Esophagus muscularis mucosa (tissue), 4 donors: ENCODE measurements at regions of chr19 and their contacts with region 1.

Region 1: DNA sequence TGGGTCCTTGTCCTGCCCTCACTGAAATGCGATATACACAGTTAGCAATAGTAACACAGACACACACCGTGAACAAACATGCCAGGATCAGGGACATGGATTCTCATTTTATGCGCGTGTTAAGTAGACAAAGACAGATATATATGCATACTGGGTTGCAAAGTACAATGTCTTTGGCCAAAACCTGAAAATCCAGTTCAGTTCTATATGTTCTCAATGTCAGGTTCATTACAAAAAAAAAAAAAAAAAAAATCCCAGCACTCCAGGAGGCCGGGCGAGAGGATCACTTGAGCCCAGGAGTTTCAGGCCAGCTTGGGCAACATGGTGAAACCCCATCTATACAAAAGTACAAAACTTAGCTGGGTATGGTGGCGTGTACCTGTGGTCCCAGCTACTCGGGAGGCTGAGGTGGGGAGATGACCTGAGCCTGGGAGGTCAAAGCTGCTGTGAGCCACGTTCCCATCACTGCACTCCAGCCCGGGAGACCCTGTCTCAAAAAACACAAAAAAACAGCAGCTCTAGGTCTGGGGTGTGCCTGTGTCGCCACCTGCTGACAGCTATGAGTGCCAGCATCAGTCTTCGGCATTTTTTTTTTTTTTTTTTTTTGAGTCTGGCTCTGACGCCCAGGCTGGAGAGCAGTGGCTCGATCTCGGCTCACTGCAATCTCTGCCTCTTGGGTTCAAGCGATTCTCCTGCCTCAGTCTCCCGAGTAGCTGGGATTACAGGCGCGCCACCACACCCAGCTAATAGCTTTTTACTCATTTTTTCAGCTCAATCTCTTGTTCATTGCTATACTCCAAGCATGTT is 10.3 kb downstream of the AP2S1 start:
- DNase-seq: no peak
- H3K4me3 ChIP-seq: no peak overlapping the region
- H3K27ac ChIP-seq: peak overlapping the region; percentile 65 to 81 (median 68)
- H3K4me1 ChIP-seq: peaks cover 6 to 38% (median 34%) of the 10 kb centered on the region in 4 donors
- H3K27me3 ChIP-seq: no peaks in the 10 kb centered on the region
- CTCF ChIP-seq: peak; percentile 78 to 82 (median 80)
- EP300 ChIP-seq: no peak
- POLR2A ChIP-seq: no peak

Region 2: DNA sequence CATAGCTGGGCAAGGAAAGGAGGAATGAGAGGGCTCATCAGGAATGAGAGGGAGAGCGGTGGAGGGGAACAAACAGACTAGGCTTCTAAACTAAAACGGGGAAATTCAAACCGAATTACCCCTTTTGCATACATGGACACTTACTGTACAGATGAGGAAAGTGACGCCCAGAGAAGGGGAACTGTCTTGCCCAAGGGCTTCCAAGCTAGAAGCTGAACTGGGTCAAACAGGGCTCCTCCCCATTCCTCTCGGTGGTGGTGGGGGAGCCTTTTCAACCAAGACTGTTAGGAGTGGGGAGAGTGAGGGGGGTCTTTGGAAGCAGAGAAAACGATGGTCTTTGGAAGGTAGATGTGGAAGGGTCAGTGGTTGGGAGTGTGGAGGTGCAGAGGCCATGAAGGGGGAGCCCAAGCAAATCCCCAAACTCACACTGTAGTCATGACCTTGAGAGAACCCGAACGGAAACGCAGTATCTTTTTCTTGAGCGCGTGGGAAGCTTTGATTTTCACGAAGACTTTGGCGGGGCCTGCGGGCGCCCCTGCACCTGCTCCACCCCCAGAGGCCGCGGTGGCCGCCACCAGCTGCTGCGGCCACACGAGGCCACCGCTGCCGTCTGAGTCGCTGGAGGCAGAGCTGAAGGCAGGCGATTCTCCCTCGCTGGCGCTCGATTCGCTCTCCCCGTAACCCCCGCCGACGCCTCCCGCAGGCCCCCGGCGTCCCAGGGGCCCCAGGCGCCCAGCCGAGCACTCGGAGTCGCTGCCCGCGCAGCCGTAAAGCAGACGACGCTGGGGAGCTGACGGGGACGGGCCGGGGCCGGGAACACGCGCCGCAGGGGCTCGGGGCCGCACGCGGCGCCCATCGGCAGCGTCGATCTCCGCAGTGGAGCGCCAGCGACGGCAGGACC is 192.0 kb before region 1 on chr19:
- intact Hi-C with region 1: no loop called
- DNase-seq: no peak
- H3K4me3 ChIP-seq: no peak overlapping the region
- H3K27ac ChIP-seq: peak overlapping the region; percentile 13 to 44 (median 24)
- H3K4me1 ChIP-seq: peaks cover 0 to 53% (median 35%) of the 10 kb centered on the region in 4 donors
- H3K27me3 ChIP-seq: peaks cover 0 to 10% (median 0%) of the 10 kb centered on the region in 4 donors
- CTCF ChIP-seq: no peak
- EP300 ChIP-seq: no peak
- POLR2A ChIP-seq: no peak

Region 3: GRCh38 chr19:46704379-46705076 is 135.8 kb before region 1 on chr19:
- intact Hi-C with region 1: loop called (anchors 5 kb)
- DNase-seq: peak; percentile 95
- H3K4me3 ChIP-seq: no peak overlapping the region
- H3K27ac ChIP-seq: no peak overlapping the region
- H3K4me1 ChIP-seq: peaks cover 0 to 8% (median 0%) of the 10 kb centered on the region in 4 donors
- H3K27me3 ChIP-seq: no peaks in the 10 kb centered on the region
- CTCF ChIP-seq: peak; percentile 93 to 98 (median 96)
- EP300 ChIP-seq: no peak
- POLR2A ChIP-seq: no peak

Region 4: DNA sequence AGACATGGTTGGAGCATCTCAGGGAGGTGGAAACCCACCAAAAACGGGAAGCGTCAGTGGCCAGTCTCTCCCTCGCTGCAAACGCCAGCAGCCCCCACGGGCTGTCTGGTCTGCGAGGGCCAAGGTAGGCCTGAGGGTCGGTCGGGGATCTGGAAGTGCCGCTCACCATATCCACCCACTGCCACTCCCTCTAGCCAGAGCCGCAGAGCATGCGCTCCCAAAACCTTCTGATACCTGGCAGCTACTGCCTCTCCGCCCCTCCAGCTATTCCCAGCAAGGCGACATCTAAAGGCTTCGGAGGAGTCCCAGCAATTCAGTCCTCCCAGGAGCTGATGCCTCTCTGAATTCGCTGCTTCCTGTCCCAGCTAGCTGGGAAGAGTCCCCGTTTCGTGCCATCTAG is 98.9 kb before region 1 on chr19:
- intact Hi-C with region 1: no loop called
- DNase-seq: no peak
- H3K4me3 ChIP-seq: no peak overlapping the region
- H3K27ac ChIP-seq: peak overlapping the region in 1 of 4 donors; percentile 85
- H3K4me1 ChIP-seq: peaks cover 70 to 91% (median 90%) of the 10 kb centered on the region in 4 donors
- H3K27me3 ChIP-seq: no peaks in the 10 kb centered on the region
- CTCF ChIP-seq: no peak
- EP300 ChIP-seq: no peak
- POLR2A ChIP-seq: no peak

Region 5: GRCh38 chr19:46753420-46754155 is 86.8 kb before region 1 on chr19:
- intact Hi-C with region 1: loop called (anchors 2 kb)
- DNase-seq: no peak
- H3K4me3 ChIP-seq: no peak overlapping the region
- H3K27ac ChIP-seq: peak overlapping the region in 1 of 4 donors; percentile 81
- H3K4me1 ChIP-seq: peaks cover 0 to 42% (median 30%) of the 10 kb centered on the region in 4 donors
- H3K27me3 ChIP-seq: no peaks in the 10 kb centered on the region
- CTCF ChIP-seq: peak in 2 of 3 experiments; percentile 37 to 43
- EP300 ChIP-seq: no peak
- POLR2A ChIP-seq: no peak